ENCODE measurements at regions of chr18 and their contacts with region 1.

Region 1: DNA sequence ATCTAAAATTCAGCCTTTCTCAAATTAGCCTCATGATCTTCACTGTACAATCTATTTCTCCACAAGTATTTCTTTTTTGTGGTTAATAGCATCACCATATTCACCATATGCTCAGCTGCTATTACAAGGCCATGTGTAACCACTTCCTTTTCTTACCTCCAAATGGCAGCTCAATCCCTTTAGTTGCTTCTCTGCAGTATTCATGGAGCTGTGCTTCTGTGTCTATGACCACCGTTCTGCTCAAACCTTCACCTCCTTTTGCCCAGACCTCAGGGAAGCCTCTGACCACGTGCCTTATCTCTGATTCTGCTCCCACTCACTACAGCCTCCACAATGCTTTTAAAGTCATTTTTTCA is 126.7 kb upstream of the TMEM200C start:
- DNase-seq: no peak
- H3K4me3 ChIP-seq: no peak overlapping the region
- CTCF ChIP-seq: no peak
- POLR2A ChIP-seq: no peak

Region 2: GRCh38 chr18:5175378-5175777 is 846.7 kb before region 1 on chr18:
- intact Hi-C with region 1: loop called (anchors 10 kb)
- DNase-seq: no peak
- H3K4me3 ChIP-seq: no peak overlapping the region
- CTCF ChIP-seq: no peak
- POLR2A ChIP-seq: no peak

Region 3: DNA sequence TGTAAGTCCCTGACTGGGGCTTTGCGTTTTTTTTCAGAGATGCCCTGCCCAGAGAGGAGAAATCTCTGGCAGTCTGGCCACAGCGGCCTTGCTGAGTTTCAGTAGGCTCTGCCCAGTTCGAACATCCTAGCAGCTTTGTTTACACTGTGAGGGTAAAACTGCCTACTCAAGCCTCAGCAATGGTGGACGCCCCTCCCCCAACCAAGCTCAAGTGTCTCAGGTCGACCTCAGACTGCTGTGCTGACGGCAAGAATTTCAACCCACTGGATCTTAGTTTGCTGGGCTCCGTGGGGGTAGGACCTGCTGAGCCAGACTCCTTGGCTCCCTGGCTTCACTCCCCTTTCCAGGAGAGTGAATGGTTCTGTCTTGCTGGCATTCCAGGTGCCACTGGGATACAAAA is 360.9 kb after region 1 on chr18:
- intact Hi-C with region 1: no loop called
- DNase-seq: no peak
- H3K4me3 ChIP-seq: no peak overlapping the region
- CTCF ChIP-seq: no peak
- POLR2A ChIP-seq: no peak